ENCODE measurements at regions of chr17 and their contacts with region 1.

Region 1: GRCh38 chr17:10618202-10618635 is 38.9 kb downstream of the MYH3 start:
- DNase-seq: no peak
- ATAC-seq: peak; percentile 88

Region 2: DNA sequence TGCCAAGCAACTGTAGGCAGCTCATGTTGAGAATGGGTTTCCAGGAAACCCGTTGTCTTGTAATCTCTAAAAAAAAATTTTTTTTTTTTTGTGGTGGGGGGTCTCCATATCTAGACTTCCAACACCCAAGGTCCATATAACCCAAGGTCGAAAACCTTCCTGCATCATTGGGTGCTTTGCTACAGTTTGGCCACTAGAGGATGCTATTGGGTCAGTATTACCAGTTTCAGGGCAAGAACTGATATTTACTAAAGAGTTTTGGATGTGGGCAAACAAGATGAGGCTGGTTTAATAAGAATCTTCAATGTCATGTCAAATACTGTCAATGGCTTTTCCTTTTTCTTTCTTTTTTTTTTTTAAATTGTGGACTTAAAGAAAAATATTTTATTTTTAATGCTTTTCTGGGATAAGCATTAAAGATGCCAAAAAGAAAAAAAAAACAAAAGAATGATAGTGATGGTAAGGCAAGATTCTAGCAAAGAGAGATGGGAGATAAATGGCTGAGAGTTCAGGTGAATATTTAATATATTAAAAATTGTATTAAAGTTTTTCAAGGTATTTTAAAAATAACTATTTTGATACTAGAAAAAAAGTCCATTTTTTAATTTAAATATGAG is 889.1 kb before region 1 on chr17:
- intact Hi-C with region 1: loop called (anchors 10 kb)
- DNase-seq: no peak
- ATAC-seq: peak; percentile 63

Region 3: DNA sequence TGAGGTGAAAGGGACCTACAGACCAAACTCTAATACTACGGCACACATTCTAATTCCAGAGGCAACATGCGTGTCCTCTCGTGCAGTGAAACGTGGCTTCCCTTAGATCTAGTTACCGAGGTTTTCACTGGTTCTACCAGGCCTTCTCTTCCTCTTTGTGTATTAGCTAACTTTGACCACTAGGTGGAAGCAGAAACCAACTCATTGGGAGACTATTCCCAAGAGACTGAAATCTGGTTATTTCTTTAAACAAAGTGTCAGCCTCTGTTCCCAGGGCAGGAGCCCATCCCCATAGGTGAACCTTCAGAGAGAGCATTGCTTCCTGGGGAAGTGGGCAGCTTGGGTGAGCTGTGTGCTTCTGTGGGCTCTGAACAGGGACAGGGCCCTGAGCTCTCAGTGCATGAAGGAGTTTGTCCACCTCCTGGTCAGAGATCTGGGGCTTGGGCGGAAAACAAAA is 693.5 kb before region 1 on chr17:
- intact Hi-C with region 1: loop called (anchors 5 kb)
- DNase-seq: no peak
- ATAC-seq: peak; percentile 35

Region 4: DNA sequence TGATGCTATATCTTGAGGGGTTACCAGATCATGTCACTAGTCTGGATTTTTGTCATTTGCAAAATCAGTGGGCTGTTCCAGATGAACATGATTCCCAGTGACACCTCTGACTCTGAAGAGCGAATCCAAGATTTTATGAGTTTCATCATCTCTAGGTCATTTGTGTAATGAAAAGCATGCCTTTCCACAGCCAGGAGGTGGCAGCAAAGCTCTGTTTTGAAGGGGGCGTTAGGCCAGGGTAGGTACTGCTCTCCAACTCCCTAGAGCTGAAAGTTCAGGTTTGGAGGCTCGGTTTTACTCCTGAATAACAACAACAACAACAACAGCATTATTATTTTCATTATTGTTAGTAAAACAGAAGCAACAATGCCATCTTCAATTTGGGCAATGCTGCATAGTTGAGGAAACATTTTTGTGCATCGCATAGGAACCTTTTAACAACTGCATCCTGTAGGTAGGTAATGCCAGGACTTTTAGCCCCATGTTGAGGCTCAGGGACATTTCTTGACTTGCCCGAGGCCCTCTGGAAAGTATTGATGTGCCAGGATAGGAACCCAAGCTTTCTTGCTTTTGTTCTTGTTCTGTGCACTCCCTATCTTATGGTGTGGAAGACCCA is 322.4 kb before region 1 on chr17:
- intact Hi-C with region 1: loop called (anchors 10 kb)
- DNase-seq: no peak
- ATAC-seq: peak; percentile 63

Region 5: DNA sequence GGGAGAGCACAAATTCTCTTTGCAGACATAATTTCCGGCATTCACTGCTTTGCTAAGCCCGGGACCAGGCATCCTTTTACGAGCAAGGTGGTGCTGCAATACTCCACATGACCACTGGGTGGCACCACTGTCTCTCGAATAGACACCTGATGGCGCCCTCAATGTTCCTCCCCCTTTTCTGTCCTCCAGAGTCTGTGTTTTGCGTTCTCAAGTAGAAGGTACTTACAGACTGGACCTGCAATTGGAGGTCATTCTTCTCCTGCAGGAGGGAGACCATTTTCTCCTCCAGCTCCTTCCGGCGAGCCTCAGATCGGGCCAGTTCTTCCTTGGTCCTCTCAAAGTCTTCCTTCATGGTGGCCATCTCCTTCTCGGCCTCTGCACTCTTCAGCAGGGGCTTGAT is 290.6 kb before region 1 on chr17:
- intact Hi-C with region 1: loop called (anchors 2 kb)
- DNase-seq: no peak
- ATAC-seq: peak; percentile 63

Region 6: GRCh38 chr17:11495613-11496012 is 877.4 kb after region 1 on chr17:
- intact Hi-C with region 1: no loop called
- DNase-seq: peak; percentile 27
- ATAC-seq: no peak

Measured in Right ventricle myocardium inferior (tissue), 1 donor.